CD8-positive, alpha-beta memory T cell (primary cell): ENCODE measurements at regions of chr6 and their contacts with region 1.

Region 1: DNA sequence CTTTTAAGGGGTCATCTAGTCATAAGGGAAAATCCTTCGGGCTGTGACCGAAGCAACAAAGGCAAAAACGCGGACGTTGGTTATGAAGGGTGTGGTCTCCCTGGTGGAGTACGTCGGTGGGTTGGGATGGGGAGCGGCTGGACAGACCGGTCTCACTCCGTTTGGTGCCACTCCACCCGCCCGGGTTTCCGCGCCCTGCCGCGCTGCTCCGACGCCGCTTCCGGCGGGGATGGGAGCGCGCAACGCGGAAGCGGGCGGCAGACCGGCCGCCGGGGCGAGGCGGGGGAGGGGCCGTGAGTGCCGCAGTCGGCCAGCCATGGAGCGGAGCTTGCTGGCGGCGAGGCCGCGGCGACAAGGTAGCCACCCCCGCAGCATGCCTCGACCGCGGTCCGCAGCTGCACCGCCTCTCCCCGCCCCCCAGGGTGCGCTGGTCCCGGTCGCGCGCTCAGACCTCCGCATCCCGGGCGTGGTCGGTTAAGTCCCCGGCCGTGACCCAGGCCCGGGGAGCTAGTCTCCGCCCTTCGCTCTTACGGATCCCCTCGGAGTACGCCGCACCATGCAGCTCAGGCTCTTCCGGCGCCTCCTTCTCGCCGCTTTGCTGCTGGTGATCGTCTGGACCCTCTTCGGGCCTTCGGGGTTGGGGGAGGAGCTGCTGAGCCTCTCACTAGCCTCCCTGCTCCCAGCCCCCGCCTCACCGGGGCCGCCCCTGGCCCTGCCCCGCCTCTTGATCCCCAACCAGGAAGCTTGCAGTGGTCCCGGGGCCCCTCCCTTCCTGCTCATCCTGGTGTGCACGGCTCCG is at the start of gene B3GALT4:
- DNase-seq: peak; percentile 58 to 79 (median 73)
- H3K4me3 ChIP-seq: peak within 1 kb of the TSS; percentile 80
- H3K4me3 Mint-ChIP-seq: peak within 1 kb of the TSS; percentile 88 to 98 (median 89)
- H3K27ac ChIP-seq: peak within 1 kb of the TSS; percentile 68
- H3K27ac Mint-ChIP-seq: peak within 1 kb of the TSS; percentile 90 to 99 (median 94)
- H3K4me1 ChIP-seq: peaks cover 57% of the 10 kb centered on the region
- H3K4me1 Mint-ChIP-seq: peaks cover 61 to 92% (median 79%) of the 10 kb centered on the region in 3 donors
- H3K27me3 ChIP-seq: no peaks in the 10 kb centered on the region
- H3K27me3 Mint-ChIP-seq: no peaks in the 10 kb centered on the region
- total RNA-seq, gene B3GALT4: 6.1 to 7.0 TPM

Region 2: GRCh38 chr6:33288921-33289748 is 12.1 kb after region 1 on chr6 and contains the starts of genes PFDN6 and WDR46:
- CTCF ChIA-PET with region 1: interaction called, 38 read pairs
- POLR2A ChIA-PET with region 1: interaction called, 43 read pairs
- DNase-seq: peak; percentile 65 to 89 (median 84)
- H3K4me3 ChIP-seq: peak within 1 kb of the TSS; percentile 99
- H3K4me3 Mint-ChIP-seq: peak within 1 kb of the TSS; percentile 89 to 99 (median 97)
- H3K27ac ChIP-seq: peak within 1 kb of the TSS; percentile 83
- H3K27ac Mint-ChIP-seq: peak within 1 kb of the TSS; percentile 79 to 99 (median 96)
- H3K4me1 ChIP-seq: peaks cover 24% of the 10 kb centered on the region
- H3K4me1 Mint-ChIP-seq: peaks cover 37 to 52% (median 49%) of the 10 kb centered on the region in 3 donors
- H3K27me3 ChIP-seq: no peaks in the 10 kb centered on the region
- H3K27me3 Mint-ChIP-seq: no peaks in the 10 kb centered on the region
- total RNA-seq, gene PFDN6: 118 to 119 TPM
- total RNA-seq, gene WDR46: 112 to 117 TPM

Region 3: GRCh38 chr6:33317669-33318425 is 40.8 kb after region 1 on chr6 and contains the start of gene ZBTB22:
- CTCF ChIA-PET with region 1: interaction called, 8 read pairs
- POLR2A ChIA-PET with region 1: interaction called, 10 read pairs
- DNase-seq: peak; percentile 94 to 97 (median 96)
- H3K4me3 ChIP-seq: peak within 1 kb of the TSS; percentile 100
- H3K4me3 Mint-ChIP-seq: peak within 1 kb of the TSS; percentile 94 to 100 (median 100)
- H3K27ac ChIP-seq: peak within 1 kb of the TSS; percentile 72
- H3K27ac Mint-ChIP-seq: peak within 1 kb of the TSS; percentile 95 to 99 (median 98)
- H3K4me1 ChIP-seq: peaks cover 66% of the 10 kb centered on the region
- H3K4me1 Mint-ChIP-seq: peaks cover 71 to 84% (median 71%) of the 10 kb centered on the region in 3 donors
- H3K27me3 ChIP-seq: no peaks in the 10 kb centered on the region
- H3K27me3 Mint-ChIP-seq: peaks cover 0 to 3% of the 10 kb centered on the region in 2 donors
- total RNA-seq, gene ZBTB22: 6.9 to 7.8 TPM

Region 4: GRCh38 chr6:33425668-33426577 is 148.9 kb after region 1 on chr6:
- CTCF ChIA-PET with region 1: interaction called, 10 read pairs
- POLR2A ChIA-PET with region 1: interaction called, 3 read pairs
- DNase-seq: peak; percentile 78 to 90 (median 80)
- H3K4me3 ChIP-seq: peak overlapping the region; percentile 69
- H3K4me3 Mint-ChIP-seq: peak overlapping the region; percentile 84 to 93 (median 91)
- H3K27ac ChIP-seq: peak overlapping the region; percentile 88
- H3K27ac Mint-ChIP-seq: peak overlapping the region; percentile 97 to 100 (median 99)
- H3K4me1 ChIP-seq: peaks cover 48% of the 10 kb centered on the region
- H3K4me1 Mint-ChIP-seq: peaks cover 66 to 73% (median 71%) of the 10 kb centered on the region in 3 donors
- H3K27me3 ChIP-seq: no peaks in the 10 kb centered on the region
- H3K27me3 Mint-ChIP-seq: peaks cover 0 to 11% of the 10 kb centered on the region in 2 donors